ENCODE measurements at regions of chr10 and their contacts with region 1.

Region 1: DNA sequence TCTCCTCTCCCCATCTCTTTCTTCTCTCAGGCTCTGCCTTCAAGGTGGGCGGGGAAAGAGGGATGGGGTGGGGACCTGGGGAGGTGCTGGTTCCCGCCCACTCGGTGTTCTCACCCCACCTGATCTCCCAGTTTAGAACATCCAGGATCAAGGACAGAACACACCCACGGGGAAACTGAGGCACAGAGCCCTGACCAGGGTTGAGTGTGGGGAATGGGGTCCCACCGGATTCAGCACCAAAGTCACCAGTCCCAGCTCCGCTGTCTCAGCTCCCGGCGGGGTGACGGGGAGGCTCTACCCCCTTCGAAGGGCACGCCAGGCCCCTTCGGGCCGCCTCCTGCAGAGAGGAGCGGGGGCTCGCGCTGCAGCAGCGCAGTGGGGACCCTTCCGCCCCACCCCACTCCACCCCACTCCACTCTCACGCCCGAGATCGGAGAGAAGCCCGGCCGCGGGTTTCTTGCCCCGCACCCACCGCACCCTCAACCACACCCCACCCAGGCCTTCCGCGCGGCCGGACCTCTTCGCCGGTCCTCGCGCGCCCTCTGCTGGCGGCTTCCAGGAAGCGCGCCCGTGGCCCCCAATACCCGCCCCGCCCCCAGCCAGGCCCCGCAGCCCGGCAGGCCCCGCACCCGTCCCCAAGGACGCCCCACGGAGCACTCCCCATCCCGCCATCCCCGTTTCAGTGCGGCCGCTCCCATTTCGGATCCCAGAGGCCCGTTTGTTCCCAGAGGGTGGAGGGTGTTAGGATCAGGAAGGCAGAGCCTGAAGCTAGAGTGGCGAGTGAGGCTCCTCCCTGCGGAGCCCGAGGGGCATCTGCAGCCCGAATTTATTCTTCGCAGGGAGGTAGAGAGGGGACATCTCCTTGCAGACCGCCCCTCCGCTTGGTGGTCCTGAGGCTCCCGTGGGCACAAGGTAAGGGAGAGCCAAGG is 18.0 kb downstream of the POLL start:
- DNase-seq: peak; percentile 88
- H3K4me3 ChIP-seq: peak overlapping the region; percentile 13 to 61 (median 48)
- H3K27ac ChIP-seq: peak overlapping the region in 1 of 4 donors; percentile 28
- H3K4me1 ChIP-seq: peaks cover 0 to 26% (median 24%) of the 10 kb centered on the region in 4 donors
- H3K27me3 ChIP-seq: peaks cover 41 to 60% (median 52%) of the 10 kb centered on the region in 3 donors
- CTCF ChIP-seq: peak; percentile 53 to 97 (median 64)
- EP300 ChIP-seq: no peak
- POLR2A ChIP-seq: no peak

Region 2: DNA sequence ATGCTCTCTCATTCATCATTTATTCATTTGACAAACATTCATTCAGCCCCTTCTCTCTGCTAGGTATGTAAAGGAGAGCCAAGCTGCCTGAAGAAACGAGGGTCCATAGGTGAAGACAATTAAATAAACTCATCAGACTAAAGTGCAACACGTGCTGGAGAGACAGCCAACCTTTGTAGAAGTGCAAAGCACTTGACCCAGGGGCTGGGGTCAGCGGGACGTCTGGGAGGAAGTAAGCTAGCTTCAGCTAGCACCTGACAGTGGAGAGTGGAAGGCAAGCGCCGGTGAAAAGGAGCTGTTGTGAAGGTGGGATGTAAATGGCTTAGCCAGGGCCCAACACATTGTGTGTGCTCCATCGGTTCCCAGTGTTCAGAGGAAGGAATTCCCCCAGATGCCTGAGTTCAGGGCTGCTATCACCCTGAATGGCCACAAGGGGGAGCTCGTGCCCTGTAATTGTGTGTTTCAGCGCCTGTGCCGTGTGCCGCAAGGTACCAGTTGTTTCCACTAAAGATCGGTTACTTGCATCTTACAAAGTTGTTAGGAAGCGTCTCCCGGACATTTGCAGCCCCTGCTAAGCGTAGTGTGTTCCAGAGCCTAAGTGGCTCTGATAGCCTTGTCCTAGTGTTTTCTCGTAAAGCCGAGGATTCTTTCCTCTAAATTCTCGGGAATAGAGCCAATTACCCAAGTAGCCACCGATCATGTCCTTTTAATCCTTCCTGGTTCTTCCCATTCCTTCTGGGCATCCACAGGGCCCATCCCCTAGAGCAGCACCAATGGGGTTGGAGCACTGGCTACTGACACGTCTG is 408.4 kb before region 1 on chr10:
- intact Hi-C with region 1: loop called (anchors 2 kb)
- DNase-seq: peak; percentile 79
- H3K4me3 ChIP-seq: peak overlapping the region in 3 of 4 donors; percentile 10 to 35 (median 35)
- H3K27ac ChIP-seq: no peak overlapping the region
- H3K4me1 ChIP-seq: peaks cover 0 to 5% (median 2%) of the 10 kb centered on the region in 4 donors
- H3K27me3 ChIP-seq: peaks cover 0 to 64% (median 0%) of the 10 kb centered on the region in 3 donors
- CTCF ChIP-seq: peak; percentile 79 to 99 (median 89)
- EP300 ChIP-seq: no peak
- POLR2A ChIP-seq: no peak

Region 3: DNA sequence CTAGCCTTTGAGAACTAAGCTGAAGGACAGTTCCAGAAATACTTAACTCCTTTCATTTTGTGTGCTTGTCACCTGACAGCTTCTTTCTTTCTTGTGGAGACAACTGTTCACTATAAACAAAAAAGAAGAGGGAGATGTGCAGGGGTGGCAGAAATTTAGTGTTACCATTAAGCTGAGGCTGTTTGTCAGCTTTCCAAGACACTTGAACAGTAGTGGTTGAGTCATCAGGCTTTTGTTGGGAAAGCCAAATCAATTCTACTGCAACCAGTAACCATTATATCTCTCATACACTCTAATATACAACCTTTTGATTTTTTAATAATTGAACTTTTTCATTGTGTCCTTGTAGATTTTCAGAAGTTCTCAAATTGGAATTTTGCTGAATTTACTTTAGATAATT is 57.4 kb before region 1 on chr10:
- intact Hi-C with region 1: no loop called
- DNase-seq: no peak
- H3K4me3 ChIP-seq: no peak overlapping the region
- H3K27ac ChIP-seq: no peak overlapping the region
- H3K4me1 ChIP-seq: peaks cover 0 to 9% (median 6%) of the 10 kb centered on the region in 4 donors
- H3K27me3 ChIP-seq: no peaks in the 10 kb centered on the region
- CTCF ChIP-seq: no peak
- EP300 ChIP-seq: no peak
- POLR2A ChIP-seq: no peak

Region 4: GRCh38 chr10:101545898-101546297 is 24.2 kb before region 1 on chr10:
- intact Hi-C with region 1: no loop called
- DNase-seq: no peak
- H3K4me3 ChIP-seq: no peak overlapping the region
- H3K27ac ChIP-seq: no peak overlapping the region
- H3K4me1 ChIP-seq: peaks cover 0 to 13% (median 11%) of the 10 kb centered on the region in 4 donors
- H3K27me3 ChIP-seq: no peaks in the 10 kb centered on the region
- CTCF ChIP-seq: no peak
- EP300 ChIP-seq: no peak
- POLR2A ChIP-seq: no peak

Region 5: DNA sequence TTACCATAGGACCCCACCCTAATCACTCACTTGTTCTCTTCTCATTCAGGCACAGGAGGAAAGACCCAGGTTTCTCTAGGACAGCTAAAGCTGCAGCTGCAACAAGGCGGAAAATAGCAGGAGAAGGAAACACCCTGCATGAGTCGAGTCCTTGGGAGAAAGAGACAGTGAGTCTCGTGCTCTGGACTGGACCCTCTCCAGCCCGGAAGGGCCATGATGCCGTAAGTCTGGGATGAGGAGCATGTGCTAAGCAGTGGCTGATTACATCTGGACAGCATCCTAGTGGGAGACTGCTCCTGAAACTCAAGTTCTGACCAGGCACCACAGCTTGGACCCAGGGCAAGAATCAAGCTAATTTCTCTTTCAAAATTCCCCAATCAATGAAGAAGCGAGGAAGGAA is 85.5 kb after region 1 on chr10:
- intact Hi-C with region 1: no loop called
- DNase-seq: peak; percentile 84
- H3K4me3 ChIP-seq: no peak overlapping the region
- H3K27ac ChIP-seq: no peak overlapping the region
- H3K4me1 ChIP-seq: no peaks in the 10 kb centered on the region
- H3K27me3 ChIP-seq: no peaks in the 10 kb centered on the region
- CTCF ChIP-seq: no peak
- EP300 ChIP-seq: no peak
- POLR2A ChIP-seq: no peak

Region 6: GRCh38 chr10:101693978-101694673 is 124.0 kb after region 1 on chr10:
- intact Hi-C with region 1: no loop called
- DNase-seq: peak; percentile 84
- H3K4me3 ChIP-seq: peak overlapping the region; percentile 81 to 90 (median 82)
- H3K27ac ChIP-seq: peak overlapping the region; percentile 95 to 99 (median 98)
- H3K4me1 ChIP-seq: peaks cover 0 to 47% (median 45%) of the 10 kb centered on the region in 4 donors
- H3K27me3 ChIP-seq: no peaks in the 10 kb centered on the region
- CTCF ChIP-seq: no peak
- EP300 ChIP-seq: no peak
- POLR2A ChIP-seq: no peak

Measured in sigmoid colon (tissue), 7 donors.